H1 (cell line): ENCODE measurements at regions of chr3 and their contacts with region 1.

Region 1: DNA sequence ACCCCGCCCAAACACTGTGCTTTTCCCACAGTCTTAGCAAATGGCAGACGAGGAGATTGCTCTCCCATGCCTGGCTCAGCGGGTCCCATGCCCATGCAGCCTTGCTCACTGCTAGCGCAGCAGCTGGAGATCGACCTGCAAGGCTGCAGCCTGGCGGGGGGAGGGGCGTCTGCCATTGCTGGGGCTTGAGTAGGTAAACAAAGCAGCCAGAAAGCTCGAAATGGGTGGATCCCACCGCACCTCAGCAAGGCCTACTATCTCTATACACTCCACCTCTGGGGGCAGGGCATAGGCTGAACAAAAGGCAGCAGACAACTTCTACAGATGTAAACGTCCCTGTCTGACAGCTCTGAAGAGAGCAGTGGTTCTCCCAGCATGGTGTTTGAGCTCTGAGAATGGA is 27.2 kb upstream of the WDR5B start:
- DNase-seq: peak; percentile 81 to 84
- H3K4me3 ChIP-seq: peak overlapping the region in 1 of 4 experiments; percentile 37; a peak in 1 of 8 replicates
- H3K27ac ChIP-seq: peak overlapping the region; percentile 73; the same call in 1 of the 2 replicates
- H3K4me1 ChIP-seq: peaks cover 2 to 8% (median 4%) of the 10 kb centered on the region in 4 experiments; a peak in 4 of 7 replicates
- H3K27me3 ChIP-seq: no peaks in the 10 kb centered on the region
- CTCF ChIP-seq: no peak
- EP300 ChIP-seq: no peak; a peak in 1 of 3 replicates
- POLR2A ChIP-seq: no peak
- RAD21 ChIP-seq: peak; percentile 2 to 13; a peak in 1 of 4 replicates

Region 2: DNA sequence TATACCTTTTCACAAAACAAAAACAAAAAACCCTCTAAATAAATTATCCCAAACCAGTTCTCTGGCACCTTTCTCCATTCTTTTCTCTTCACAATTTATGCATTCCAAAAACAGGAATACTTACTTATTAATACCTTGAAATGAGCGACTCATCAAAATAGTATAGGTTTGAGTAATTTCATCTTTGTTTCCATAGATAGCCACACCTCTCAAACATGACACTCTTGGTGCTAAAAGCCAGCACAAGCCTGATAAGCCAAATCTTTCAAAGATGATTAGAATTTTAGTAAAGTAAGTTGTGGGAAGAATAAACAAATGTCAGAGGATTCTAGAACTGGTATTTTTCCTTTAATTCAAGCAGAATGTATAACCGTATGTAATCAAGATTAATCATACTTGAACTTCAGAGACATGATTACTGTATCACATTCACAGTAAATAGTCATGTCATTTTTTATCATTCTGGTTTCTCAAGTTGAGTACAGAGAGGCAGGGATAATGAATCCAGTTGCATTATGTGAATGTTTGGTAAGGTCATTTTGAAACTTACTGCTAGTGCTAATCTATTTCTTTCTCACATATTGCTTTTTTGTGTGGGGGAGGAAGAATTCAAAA is 15.1 kb before region 1 on chr3:
- CTCF ChIA-PET with region 1: interaction called, 4 read pairs
- POLR2A ChIA-PET with region 1: interaction called, 11 read pairs
- DNase-seq: no peak
- H3K4me3 ChIP-seq: no peak overlapping the region
- H3K27ac ChIP-seq: no peak overlapping the region
- H3K4me1 ChIP-seq: no peaks in the 10 kb centered on the region
- H3K27me3 ChIP-seq: no peaks in the 10 kb centered on the region
- CTCF ChIP-seq: no peak
- EP300 ChIP-seq: no peak
- POLR2A ChIP-seq: no peak
- RAD21 ChIP-seq: no peak

Region 3: GRCh38 chr3:122816587-122816986 is 373.5 kb after region 1 on chr3:
- CTCF ChIA-PET with region 1: no interaction called
- POLR2A ChIA-PET with region 1: no interaction called
- DNase-seq: no peak
- H3K4me3 ChIP-seq: no peak overlapping the region
- H3K27ac ChIP-seq: no peak overlapping the region
- H3K4me1 ChIP-seq: no peaks in the 10 kb centered on the region
- H3K27me3 ChIP-seq: no peaks in the 10 kb centered on the region
- CTCF ChIP-seq: no peak
- EP300 ChIP-seq: no peak
- POLR2A ChIP-seq: no peak
- RAD21 ChIP-seq: no peak